Activated CD4-positive, alpha-beta T cell treated with anti-CD3 and anti-CD28 coated beads, Interleukin-2, amount 10 ng/mL, durations not matched to agents 24 days and 14 days (primary cell): ENCODE measurements at regions of chr18 and their contacts with region 1.

Region 1: GRCh38 chr18:21704603-21705364 is at the start of gene ABHD3:
- DNase-seq: peak; percentile 98
- H3K4me3 Mint-ChIP-seq: peak within 1 kb of the TSS; percentile 98
- H3K27ac Mint-ChIP-seq: peak within 1 kb of the TSS; percentile 96
- H3K4me1 Mint-ChIP-seq: peaks cover 26% of the 10 kb centered on the region
- H3K27me3 Mint-ChIP-seq: no peaks in the 10 kb centered on the region
- total RNA-seq, gene ABHD3: 29.3 and 31.1 TPM in 2 replicates

Region 2: DNA sequence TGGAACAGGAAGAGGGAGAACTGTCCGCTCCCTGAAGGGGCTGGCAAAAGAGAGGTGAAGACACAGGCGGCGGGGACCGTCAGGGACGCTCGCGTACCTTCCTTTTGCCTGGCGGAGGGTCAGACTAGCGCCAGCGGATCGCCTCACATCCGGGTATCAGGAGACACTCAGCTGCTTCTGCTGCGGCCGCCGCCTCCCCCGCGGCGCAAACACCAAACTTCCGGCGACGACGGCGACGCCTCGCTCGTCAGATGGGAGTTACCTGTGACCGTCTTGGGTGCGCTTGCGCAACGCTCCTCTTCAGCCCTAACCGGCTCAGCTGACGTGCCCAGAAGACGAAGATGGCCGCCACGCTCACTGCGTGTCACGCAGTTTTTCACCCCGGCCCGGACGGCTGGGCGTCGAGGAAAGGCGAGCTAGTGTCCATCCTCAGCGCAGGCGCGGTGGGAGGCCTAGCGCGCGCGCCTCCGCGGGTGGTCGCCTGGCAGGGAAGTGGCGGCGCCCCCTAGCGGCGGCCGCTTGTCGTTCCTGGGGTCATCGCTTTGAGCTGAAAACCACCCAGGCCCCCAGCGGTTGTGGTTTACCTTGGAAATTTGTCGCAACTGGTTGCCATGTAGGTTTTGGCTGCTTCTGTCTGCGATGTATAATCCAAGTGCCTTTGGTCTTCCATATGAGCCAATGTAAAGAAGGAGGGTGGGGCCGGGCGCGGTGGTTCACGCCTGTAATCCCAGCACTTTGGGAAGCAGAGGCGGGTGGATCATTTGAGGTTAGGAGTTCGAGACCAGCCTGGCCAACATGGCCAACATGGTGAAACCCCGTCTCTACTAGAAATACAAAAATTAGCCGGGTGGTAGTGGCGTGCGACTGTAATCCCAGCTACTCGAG is 104.0 kb before region 1 on chr18 and contains the start of gene ESCO1:
- intact Hi-C with region 1: loop called (anchors 1 kb)
- DNase-seq: peak; percentile 98
- H3K4me3 Mint-ChIP-seq: peak within 1 kb of the TSS; percentile 94
- H3K27ac Mint-ChIP-seq: peak within 1 kb of the TSS; percentile 95
- H3K4me1 Mint-ChIP-seq: peaks cover 26% of the 10 kb centered on the region
- H3K27me3 Mint-ChIP-seq: no peaks in the 10 kb centered on the region
- total RNA-seq, gene ESCO1: 20.0 and 21.5 TPM in 2 replicates

Region 3: DNA sequence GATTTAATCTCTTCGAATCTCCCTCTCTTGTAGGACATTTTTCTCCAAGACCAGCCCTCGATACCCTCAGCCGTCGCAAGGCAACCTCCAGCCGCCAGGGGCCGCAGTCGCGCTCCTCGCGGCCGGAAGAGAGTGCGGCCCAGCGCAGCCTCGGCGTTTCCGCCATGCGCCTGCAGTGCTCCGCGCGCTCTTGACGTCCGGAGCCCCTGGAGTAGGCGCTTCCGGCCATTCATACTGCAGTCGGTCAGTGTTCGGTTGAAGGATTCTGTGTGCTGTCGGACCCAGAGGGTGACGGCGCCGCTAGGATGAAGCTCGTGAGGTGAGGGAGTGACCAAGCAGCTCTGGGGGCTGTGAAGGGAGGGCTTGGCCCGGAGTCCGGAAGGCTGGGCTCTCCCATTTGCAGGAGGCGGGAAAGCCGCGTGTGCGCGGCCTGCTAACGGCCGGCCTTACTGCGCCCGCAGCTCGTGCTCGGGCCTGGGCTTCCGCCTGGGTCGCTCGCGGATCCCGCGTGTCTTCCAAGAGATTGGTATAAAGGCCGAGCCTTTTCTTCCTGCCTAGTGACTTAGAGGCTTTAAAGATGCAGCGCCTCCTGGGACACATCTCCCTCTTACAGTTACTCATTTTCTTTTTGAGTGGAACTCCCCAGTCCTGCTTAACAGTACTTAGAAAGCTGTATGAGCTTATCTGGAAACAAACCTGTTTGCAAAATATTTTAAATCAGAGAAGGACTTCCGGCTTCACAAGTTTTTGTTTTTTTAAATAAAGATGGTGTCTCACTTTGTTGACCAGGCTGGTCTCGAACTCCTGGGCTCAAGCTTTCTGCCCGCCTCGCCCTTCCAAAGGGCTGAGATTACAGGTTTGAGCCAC is 92.4 kb before region 1 on chr18 and contains the start of gene SNRPD1:
- intact Hi-C with region 1: loop called (anchors 1 kb)
- DNase-seq: peak; percentile 98
- H3K4me3 Mint-ChIP-seq: peak within 1 kb of the TSS; percentile 91
- H3K27ac Mint-ChIP-seq: peak within 1 kb of the TSS; percentile 98
- H3K4me1 Mint-ChIP-seq: peaks cover 23% of the 10 kb centered on the region
- H3K27me3 Mint-ChIP-seq: no peaks in the 10 kb centered on the region
- total RNA-seq, gene SNRPD1: 182 and 192 TPM in 2 replicates

Region 4: DNA sequence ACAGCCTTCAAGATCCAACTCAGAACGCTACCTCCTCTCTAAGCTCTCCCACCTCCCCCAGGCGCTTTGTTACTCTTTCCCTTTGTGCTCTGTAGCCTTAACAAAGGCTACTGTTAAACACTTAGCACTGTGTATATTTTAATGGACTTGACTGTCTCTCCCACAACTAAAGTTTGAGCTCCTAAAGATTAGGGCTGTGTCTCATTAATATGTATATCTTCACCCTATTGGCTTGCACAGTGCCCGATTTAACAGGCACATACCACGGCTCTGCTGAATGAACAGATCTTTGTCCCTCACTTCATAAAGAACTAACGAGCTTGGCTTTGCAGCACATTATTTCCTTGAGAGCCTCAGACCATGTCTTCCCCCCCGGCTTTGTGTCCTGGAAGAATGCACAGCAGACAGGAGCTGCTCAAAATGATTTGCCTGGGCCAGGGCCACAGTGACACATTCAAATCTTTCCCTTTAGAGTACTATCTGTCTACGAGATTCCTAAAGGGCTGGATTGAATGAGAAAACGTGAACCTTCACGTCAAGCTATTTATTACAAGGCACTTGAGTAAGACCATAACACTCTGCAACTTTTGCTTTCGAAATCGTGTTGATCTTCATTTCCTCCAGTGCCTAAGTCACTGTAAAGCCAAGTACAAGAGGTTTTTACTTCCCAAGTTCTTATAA is 22.3 kb before region 1 on chr18:
- intact Hi-C with region 1: loop called (anchors 1 kb)
- DNase-seq: peak; percentile 80
- H3K4me3 Mint-ChIP-seq: no peak overlapping the region
- H3K27ac Mint-ChIP-seq: no peak overlapping the region
- H3K4me1 Mint-ChIP-seq: peaks cover 13% of the 10 kb centered on the region
- H3K27me3 Mint-ChIP-seq: no peaks in the 10 kb centered on the region

Region 5: GRCh38 chr18:22032392-22032961 is 327.7 kb after region 1 on chr18:
- intact Hi-C with region 1: no loop called
- DNase-seq: no peak
- H3K4me3 Mint-ChIP-seq: no peak overlapping the region
- H3K27ac Mint-ChIP-seq: no peak overlapping the region
- H3K4me1 Mint-ChIP-seq: no peaks in the 10 kb centered on the region
- H3K27me3 Mint-ChIP-seq: no peaks in the 10 kb centered on the region